ENCODE measurements at regions of chr6 and their contacts with region 1.

Region 1: DNA sequence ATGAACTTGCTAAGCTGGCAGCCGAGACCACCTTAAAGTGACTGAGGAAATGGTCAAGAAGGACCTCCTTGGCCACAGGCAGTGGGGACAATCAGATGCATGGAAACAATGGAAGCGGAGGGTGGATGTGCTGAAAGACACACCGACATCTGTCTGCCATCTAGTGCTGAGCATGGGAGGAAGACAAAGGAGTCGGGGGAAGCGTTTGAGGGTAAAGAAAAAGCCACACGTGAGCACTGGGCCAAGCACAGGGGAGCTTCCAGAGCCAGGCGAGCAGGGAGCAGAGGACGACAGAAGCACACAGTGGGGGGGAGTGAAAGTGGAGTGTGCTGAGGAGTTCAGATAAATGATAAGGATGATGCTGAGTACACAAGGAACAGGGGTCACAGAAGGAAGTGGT is 367.8 kb downstream of the ZFAND3 start:
- DNase-seq: no peak
- H3K4me3 ChIP-seq: no peak overlapping the region
- H3K27ac ChIP-seq: no peak overlapping the region
- H3K4me1 ChIP-seq: no peaks in the 10 kb centered on the region
- H3K27me3 ChIP-seq: no peaks in the 10 kb centered on the region
- CTCF ChIP-seq: no peak
- POLR2A ChIP-seq: no peak

Region 2: GRCh38 chr6:38264605-38265004 is 77.3 kb after region 1 on chr6:
- intact Hi-C with region 1: no loop called
- DNase-seq: no peak
- H3K4me3 ChIP-seq: no peak overlapping the region
- H3K27ac ChIP-seq: no peak overlapping the region
- H3K4me1 ChIP-seq: peaks cover 0 to 18% (median 11%) of the 10 kb centered on the region in 3 donors
- H3K27me3 ChIP-seq: no peaks in the 10 kb centered on the region
- CTCF ChIP-seq: no peak
- POLR2A ChIP-seq: no peak

Region 3: GRCh38 chr6:38477680-38478260 is 290.4 kb after region 1 on chr6:
- intact Hi-C with region 1: loop called (anchors 10 kb)
- DNase-seq: no peak
- H3K4me3 ChIP-seq: no peak overlapping the region
- H3K27ac ChIP-seq: no peak overlapping the region
- H3K4me1 ChIP-seq: no peaks in the 10 kb centered on the region
- H3K27me3 ChIP-seq: no peaks in the 10 kb centered on the region
- CTCF ChIP-seq: no peak
- POLR2A ChIP-seq: no peak